ENCODE measurements at regions of chr16 and their contacts with region 1.

Region 1: DNA sequence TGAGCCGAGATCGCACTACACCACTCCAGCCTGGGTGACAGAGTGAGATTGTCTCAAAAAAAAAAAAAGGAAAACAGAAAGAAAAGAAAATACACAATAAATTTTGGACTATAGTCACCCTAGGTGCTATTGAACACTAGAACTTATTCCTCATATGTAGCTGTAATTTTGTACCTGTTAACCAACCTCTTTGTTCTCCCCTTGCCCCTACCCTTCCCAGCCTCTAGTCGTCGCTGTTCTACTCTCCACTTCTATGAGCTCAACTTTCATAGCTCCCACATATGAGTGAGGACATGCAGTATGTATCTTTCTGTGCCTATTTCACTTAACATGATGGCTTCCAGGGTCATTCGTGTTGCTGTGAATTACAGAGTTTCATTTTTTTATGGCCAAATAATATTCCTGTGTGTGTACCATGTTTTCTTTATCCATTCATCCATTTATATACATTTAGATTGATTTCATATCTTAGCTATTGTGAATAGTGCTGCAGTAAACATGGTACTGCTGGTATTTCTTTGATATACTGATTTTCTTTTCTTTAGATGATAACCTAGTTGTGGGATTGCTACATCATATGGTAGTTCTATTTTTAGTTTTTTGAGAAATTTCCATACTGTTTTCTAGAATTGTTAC is 28.3 kb downstream of the VPS35L start:
- DNase-seq: peak; percentile 19
- H3K4me3 ChIP-seq: no peak overlapping the region
- H3K27ac ChIP-seq: no peak overlapping the region
- H3K4me1 ChIP-seq: peaks cover 0 to 3% (median 0%) of the 10 kb centered on the region in 4 donors
- H3K27me3 ChIP-seq: no peaks in the 10 kb centered on the region
- CTCF ChIP-seq: peak; percentile 65 to 85 (median 78)
- EP300 ChIP-seq: no peak
- POLR2A ChIP-seq: no peak

Region 2: GRCh38 chr16:19696328-19696727 is 112.5 kb after region 1 on chr16:
- in situ Hi-C with region 1: loop called in 1 of 4 experiments (anchors 25 kb)
- intact Hi-C with region 1: no loop called
- DNase-seq: peak; percentile 92
- H3K4me3 ChIP-seq: no peak overlapping the region
- H3K27ac ChIP-seq: peak overlapping the region; percentile 71 to 80 (median 77)
- H3K4me1 ChIP-seq: peaks cover 24 to 62% (median 44%) of the 10 kb centered on the region in 4 donors
- H3K27me3 ChIP-seq: no peaks in the 10 kb centered on the region
- CTCF ChIP-seq: no peak
- EP300 ChIP-seq: no peak
- POLR2A ChIP-seq: no peak

Measured in transverse colon (tissue), 4 donors.